ENCODE measurements at regions of chr5 and their contacts with region 1.

Region 1: GRCh38 chr5:42583322-42583721 is 160.1 kb downstream of the GHR start:
- DNase-seq: peak; percentile 60
- ATAC-seq: peak; percentile 54
- H3K4me3 ChIP-seq: no peak overlapping the region
- H3K4me3 Mint-ChIP-seq: no peak overlapping the region
- H3K27ac ChIP-seq: no peak overlapping the region
- H3K27ac Mint-ChIP-seq: no peak overlapping the region
- H3K4me1 ChIP-seq: peaks cover 0 to 5% of the 10 kb centered on the region in 2 donors
- H3K4me1 Mint-ChIP-seq: peaks cover 4% of the 10 kb centered on the region
- H3K27me3 ChIP-seq: peaks cover 0 to 4% (median 0%) of the 10 kb centered on the region in 4 experiments
- H3K27me3 Mint-ChIP-seq: peaks cover 15% of the 10 kb centered on the region
- CTCF ChIP-seq: peak; percentile 86

Region 2: DNA sequence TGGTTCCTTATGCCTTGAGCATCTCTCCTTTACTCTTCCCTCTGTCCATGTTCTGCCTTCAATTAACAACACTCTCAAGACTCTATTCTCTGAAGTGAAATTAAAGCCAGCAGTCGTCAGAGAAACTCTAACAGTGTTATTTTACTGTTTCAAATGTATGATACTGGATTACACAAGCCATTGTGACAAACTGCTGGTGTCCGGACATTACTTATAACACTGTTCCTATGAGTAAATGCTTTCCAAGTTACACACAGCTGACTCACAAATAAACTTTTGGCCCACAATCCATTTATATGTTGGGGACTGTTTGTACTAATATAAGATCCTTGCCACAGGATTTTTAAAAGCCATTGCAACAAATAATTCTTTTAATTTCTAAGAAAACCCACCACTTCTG is 223.3 kb before region 1 on chr5:
- CTCF ChIA-PET with region 1: no interaction called
- POLR2A ChIA-PET with region 1: no interaction called
- intact Hi-C with region 1: no loop called
- DNase-seq: no peak
- ATAC-seq: no peak
- H3K4me3 ChIP-seq: no peak overlapping the region
- H3K4me3 Mint-ChIP-seq: no peak overlapping the region
- H3K27ac ChIP-seq: no peak overlapping the region
- H3K27ac Mint-ChIP-seq: no peak overlapping the region
- H3K4me1 ChIP-seq: no peaks in the 10 kb centered on the region
- H3K4me1 Mint-ChIP-seq: no peaks in the 10 kb centered on the region
- H3K27me3 ChIP-seq: no peaks in the 10 kb centered on the region
- H3K27me3 Mint-ChIP-seq: no peaks in the 10 kb centered on the region
- CTCF ChIP-seq: no peak

Region 3: GRCh38 chr5:42514754-42515153 is 68.6 kb before region 1 on chr5:
- CTCF ChIA-PET with region 1: interaction called, 11 read pairs
- POLR2A ChIA-PET with region 1: no interaction called
- intact Hi-C with region 1: loop called (anchors 1 kb)
- DNase-seq: peak; percentile 44
- ATAC-seq: peak; percentile 31
- H3K4me3 ChIP-seq: no peak overlapping the region
- H3K4me3 Mint-ChIP-seq: no peak overlapping the region
- H3K27ac ChIP-seq: no peak overlapping the region
- H3K27ac Mint-ChIP-seq: no peak overlapping the region
- H3K4me1 ChIP-seq: no peaks in the 10 kb centered on the region
- H3K4me1 Mint-ChIP-seq: no peaks in the 10 kb centered on the region
- H3K27me3 ChIP-seq: no peaks in the 10 kb centered on the region
- H3K27me3 Mint-ChIP-seq: no peaks in the 10 kb centered on the region
- CTCF ChIP-seq: peak; percentile 46

Region 4: DNA sequence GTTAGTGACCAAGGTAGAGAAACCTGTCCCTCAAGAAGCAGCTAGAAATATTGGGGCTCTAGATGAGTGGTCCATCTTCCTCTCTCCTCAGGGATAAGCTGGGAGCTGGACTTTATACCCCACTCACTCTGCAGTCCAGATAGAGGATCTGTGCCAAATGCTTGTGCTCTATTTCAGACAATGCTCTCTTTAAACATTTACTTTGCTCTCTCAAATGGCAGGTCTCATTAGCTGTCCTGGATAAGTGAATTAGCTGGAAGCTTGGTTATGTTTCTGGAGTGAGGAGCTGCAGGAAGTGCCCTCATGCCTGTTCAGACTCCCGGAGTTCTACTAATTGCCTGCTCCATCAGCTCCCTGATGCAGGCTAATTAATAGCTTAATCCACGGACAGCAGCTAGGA is 22.2 kb after region 1 on chr5:
- CTCF ChIA-PET with region 1: interaction called, 10 read pairs
- POLR2A ChIA-PET with region 1: no interaction called
- intact Hi-C with region 1: no loop called
- DNase-seq: no peak
- ATAC-seq: no peak
- H3K4me3 ChIP-seq: no peak overlapping the region
- H3K4me3 Mint-ChIP-seq: no peak overlapping the region
- H3K27ac ChIP-seq: no peak overlapping the region
- H3K27ac Mint-ChIP-seq: no peak overlapping the region
- H3K4me1 ChIP-seq: peaks cover 0 to under 1% of the 10 kb centered on the region in 2 donors
- H3K4me1 Mint-ChIP-seq: no peaks in the 10 kb centered on the region
- H3K27me3 ChIP-seq: peaks cover 0 to 3% (median 0%) of the 10 kb centered on the region in 4 experiments
- H3K27me3 Mint-ChIP-seq: peaks cover 28% of the 10 kb centered on the region
- CTCF ChIP-seq: no peak

Region 5: DNA sequence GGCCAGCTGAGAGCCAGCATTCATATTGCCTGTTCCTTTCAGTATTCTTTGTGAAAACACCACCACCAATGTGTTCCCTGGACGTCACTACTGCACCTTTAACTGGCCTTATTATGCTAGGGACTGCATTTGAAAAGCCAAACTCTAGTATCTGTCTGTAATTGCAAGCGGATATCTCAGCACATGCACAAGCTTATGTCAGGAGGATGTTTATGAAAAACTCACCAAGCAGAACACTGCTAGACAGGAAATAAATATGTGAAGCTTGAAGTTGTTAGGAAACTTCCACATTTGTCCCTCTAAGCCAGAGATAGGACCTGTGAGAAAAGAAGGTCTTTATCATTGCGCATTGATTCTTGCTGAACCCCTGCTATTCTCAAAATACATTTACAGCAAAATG is 37.9 kb after region 1 on chr5:
- CTCF ChIA-PET with region 1: interaction called, 46 read pairs
- POLR2A ChIA-PET with region 1: no interaction called
- intact Hi-C with region 1: loop called (anchors 5 kb)
- DNase-seq: peak; percentile 74
- ATAC-seq: peak; percentile 94
- H3K4me3 ChIP-seq: peak overlapping the region in 1 of 5 experiments; percentile 26
- H3K4me3 Mint-ChIP-seq: peak overlapping the region; percentile 62
- H3K27ac ChIP-seq: peak overlapping the region; percentile 93 to 97
- H3K27ac Mint-ChIP-seq: peak overlapping the region; percentile 94
- H3K4me1 ChIP-seq: peaks cover 40 to 43% of the 10 kb centered on the region in 2 donors
- H3K4me1 Mint-ChIP-seq: peaks cover 50% of the 10 kb centered on the region
- H3K27me3 ChIP-seq: no peaks in the 10 kb centered on the region
- H3K27me3 Mint-ChIP-seq: peaks cover under 1% of the 10 kb centered on the region
- CTCF ChIP-seq: no peak

Region 6: DNA sequence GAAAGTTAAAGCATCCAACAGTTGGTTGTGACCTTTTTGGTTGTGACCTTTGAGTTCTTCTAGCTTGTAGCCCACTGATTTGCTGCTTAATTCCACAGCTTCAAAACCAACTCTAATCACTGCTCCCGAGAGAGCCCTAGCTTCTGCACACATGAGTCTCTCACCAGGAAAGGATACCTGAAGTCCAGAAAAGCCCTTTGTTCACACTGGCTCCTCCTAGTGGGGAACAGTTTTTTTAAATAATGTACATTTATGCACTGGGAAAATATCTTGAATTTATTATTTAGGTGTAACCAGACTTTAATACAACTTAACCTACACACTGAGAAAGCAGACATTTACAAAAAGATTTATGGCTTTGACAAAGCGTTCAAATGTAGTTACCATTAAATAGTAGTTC is 53.1 kb after region 1 on chr5:
- CTCF ChIA-PET with region 1: interaction called, 12 read pairs
- POLR2A ChIA-PET with region 1: no interaction called
- intact Hi-C with region 1: no loop called
- DNase-seq: peak; percentile 19
- ATAC-seq: no peak
- H3K4me3 ChIP-seq: no peak overlapping the region
- H3K4me3 Mint-ChIP-seq: no peak overlapping the region
- H3K27ac ChIP-seq: no peak overlapping the region
- H3K27ac Mint-ChIP-seq: no peak overlapping the region
- H3K4me1 ChIP-seq: no peaks in the 10 kb centered on the region
- H3K4me1 Mint-ChIP-seq: peaks cover 2% of the 10 kb centered on the region
- H3K27me3 ChIP-seq: no peaks in the 10 kb centered on the region
- H3K27me3 Mint-ChIP-seq: peaks cover 11% of the 10 kb centered on the region
- CTCF ChIP-seq: peak; percentile 27

Region 7: DNA sequence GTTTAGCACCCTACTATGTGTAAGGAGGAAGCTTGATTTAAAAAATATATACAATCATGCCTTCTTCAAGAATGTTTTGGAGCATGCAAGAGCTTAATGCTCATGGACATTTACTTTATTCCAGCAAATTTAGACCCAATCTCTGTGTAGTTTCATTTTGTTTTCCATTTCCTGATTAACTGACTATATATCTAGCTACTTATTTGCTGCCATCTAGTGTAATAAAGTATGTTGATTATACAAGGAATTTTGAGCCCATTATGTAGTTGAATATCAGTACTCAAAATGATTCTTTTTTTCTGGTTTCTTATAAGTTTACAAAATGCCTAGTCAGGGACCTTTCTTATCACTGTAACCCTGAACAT is 73.3 kb after region 1 on chr5:
- CTCF ChIA-PET with region 1: interaction called, 15 read pairs
- POLR2A ChIA-PET with region 1: no interaction called
- intact Hi-C with region 1: loop called (anchors 1 kb)
- DNase-seq: peak; percentile 36
- ATAC-seq: peak; percentile 45
- H3K4me3 ChIP-seq: no peak overlapping the region
- H3K4me3 Mint-ChIP-seq: no peak overlapping the region
- H3K27ac ChIP-seq: no peak overlapping the region
- H3K27ac Mint-ChIP-seq: no peak overlapping the region
- H3K4me1 ChIP-seq: peaks cover 2 to 6% of the 10 kb centered on the region in 2 donors
- H3K4me1 Mint-ChIP-seq: peaks cover 5% of the 10 kb centered on the region
- H3K27me3 ChIP-seq: no peaks in the 10 kb centered on the region
- H3K27me3 Mint-ChIP-seq: peaks cover 10% of the 10 kb centered on the region
- CTCF ChIP-seq: peak; percentile 60